Panc1 (cell line): ENCODE measurements at regions of chr5 and their contacts with region 1.

Region 1: GRCh38 chr5:126664586-126664985 is 63.8 kb downstream of the PHAX start:
- DNase-seq: no peak
- ATAC-seq: no peak
- H3K4me3 ChIP-seq: no peak overlapping the region
- H3K27ac ChIP-seq: no peak overlapping the region
- H3K4me1 ChIP-seq: no peaks in the 10 kb centered on the region
- H3K27me3 ChIP-seq: no peaks in the 10 kb centered on the region
- CTCF ChIP-seq: no peak

Region 2: GRCh38 chr5:126568206-126568755 is 96.3 kb before region 1 on chr5:
- CTCF ChIA-PET with region 1: no interaction called
- POLR2A ChIA-PET with region 1: no interaction called
- in situ Hi-C with region 1: no loop called
- intact Hi-C with region 1: no loop called
- DNase-seq: no peak
- ATAC-seq: no peak
- H3K4me3 ChIP-seq: no peak overlapping the region
- H3K27ac ChIP-seq: no peak overlapping the region
- H3K4me1 ChIP-seq: no peaks in the 10 kb centered on the region
- H3K27me3 ChIP-seq: no peaks in the 10 kb centered on the region
- CTCF ChIP-seq: no peak

Region 3: GRCh38 chr5:127111112-127111511 is 446.5 kb after region 1 on chr5:
- CTCF ChIA-PET with region 1: no interaction called
- POLR2A ChIA-PET with region 1: no interaction called
- in situ Hi-C with region 1: no loop called
- intact Hi-C with region 1: no loop called
- DNase-seq: no peak
- ATAC-seq: no peak
- H3K4me3 ChIP-seq: no peak overlapping the region
- H3K27ac ChIP-seq: no peak overlapping the region
- H3K4me1 ChIP-seq: no peaks in the 10 kb centered on the region
- H3K27me3 ChIP-seq: no peaks in the 10 kb centered on the region
- CTCF ChIP-seq: no peak

Region 4: DNA sequence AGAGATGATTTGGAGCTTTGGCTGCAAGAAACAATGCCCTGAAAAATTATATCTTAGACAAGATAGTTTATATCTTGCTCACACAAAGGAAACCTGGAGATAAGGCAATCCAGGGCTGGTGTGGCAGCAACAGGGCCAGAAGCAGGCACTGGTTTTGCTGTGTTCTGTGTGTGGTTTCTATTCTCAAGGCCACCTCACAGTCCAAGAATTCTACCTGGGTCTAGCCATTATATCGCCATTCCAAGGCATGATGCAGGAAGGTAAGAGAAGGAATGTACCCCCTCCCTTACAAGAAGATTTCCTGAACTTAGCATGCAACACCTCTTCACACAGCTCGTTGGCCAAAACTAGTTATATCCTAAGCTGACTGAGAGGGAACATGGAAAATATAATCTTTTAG is 551.6 kb after region 1 on chr5:
- CTCF ChIA-PET with region 1: interaction called, 11 read pairs
- POLR2A ChIA-PET with region 1: no interaction called
- in situ Hi-C with region 1: no loop called
- intact Hi-C with region 1: no loop called
- DNase-seq: no peak
- ATAC-seq: no peak
- H3K4me3 ChIP-seq: no peak overlapping the region
- H3K27ac ChIP-seq: no peak overlapping the region
- H3K4me1 ChIP-seq: no peaks in the 10 kb centered on the region
- H3K27me3 ChIP-seq: no peaks in the 10 kb centered on the region
- CTCF ChIP-seq: no peak